B cell (primary cell): ENCODE measurements at regions of chr3 and their contacts with region 1.

Region 1: GRCh38 chr3:129439817-129440617 is at the starts of genes IFT122 and MBD4:
- DNase-seq: peak; percentile 99
- ATAC-seq: peak; percentile 84
- H3K4me3 ChIP-seq: peak within 1 kb of the TSS; percentile 81 to 100 (median 99)
- H3K4me3 Mint-ChIP-seq: peak within 1 kb of the TSS; percentile 93
- H3K27ac ChIP-seq: peak within 1 kb of the TSS; percentile 78 to 91
- H3K27ac Mint-ChIP-seq: peak within 1 kb of the TSS; percentile 95
- H3K4me1 ChIP-seq: peaks cover 45 to 46% of the 10 kb centered on the region in 2 donors
- H3K4me1 Mint-ChIP-seq: peaks cover 52% of the 10 kb centered on the region
- H3K27me3 ChIP-seq: no peaks in the 10 kb centered on the region
- H3K27me3 Mint-ChIP-seq: no peaks in the 10 kb centered on the region
- CTCF ChIP-seq: no peak
- total RNA-seq, gene IFT122: 28.7 and 34.3 TPM in 2 replicates
- total RNA-seq, gene MBD4: 140 and 144 TPM in 2 replicates

Region 2: DNA sequence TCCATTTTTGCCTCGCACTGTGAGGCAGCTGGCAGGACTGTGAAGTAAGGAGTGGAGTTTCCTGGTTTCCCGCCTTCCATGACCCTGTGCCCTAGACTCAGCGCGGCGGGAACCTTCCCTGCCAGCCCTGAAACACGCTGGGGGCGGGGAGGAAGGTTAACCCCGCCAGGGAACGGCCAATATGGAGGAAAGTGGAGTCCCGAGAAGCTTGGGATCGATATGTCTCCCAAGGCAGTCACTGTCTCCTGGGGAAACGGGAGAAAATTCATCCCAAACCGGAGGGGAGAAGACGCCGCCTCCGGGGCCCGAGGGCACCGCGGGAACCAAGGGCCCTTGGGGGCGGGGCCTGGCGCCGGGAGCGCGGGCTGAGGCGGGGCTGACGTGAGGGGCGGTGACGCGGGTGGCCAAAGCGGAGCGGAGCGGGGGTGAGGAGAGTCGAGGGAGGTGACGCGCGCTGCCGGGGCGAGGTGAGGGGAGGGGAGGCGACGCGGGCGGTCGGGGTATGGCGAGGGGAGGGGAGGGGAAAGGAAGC is 161.5 kb before region 1 on chr3 and contains the start of gene HMCES:
- CTCF ChIA-PET with region 1: no interaction called
- POLR2A ChIA-PET with region 1: no interaction called
- intact Hi-C with region 1: loop called (anchors 5 kb)
- DNase-seq: peak; percentile 94
- ATAC-seq: peak; percentile 72
- H3K4me3 ChIP-seq: peak within 1 kb of the TSS; percentile 79 to 92 (median 88)
- H3K4me3 Mint-ChIP-seq: peak within 1 kb of the TSS; percentile 95
- H3K27ac ChIP-seq: peak within 1 kb of the TSS; percentile 86
- H3K27ac Mint-ChIP-seq: peak within 1 kb of the TSS; percentile 91
- H3K4me1 ChIP-seq: peaks cover 67 to 73% of the 10 kb centered on the region in 2 donors
- H3K4me1 Mint-ChIP-seq: peaks cover 73% of the 10 kb centered on the region
- H3K27me3 ChIP-seq: peaks cover 0 to 4% (median 0%) of the 10 kb centered on the region in 4 experiments
- H3K27me3 Mint-ChIP-seq: peaks cover 5% of the 10 kb centered on the region
- CTCF ChIP-seq: no peak
- total RNA-seq, gene HMCES: 22.1 and 22.5 TPM in 2 replicates

Region 3: GRCh38 chr3:129399145-129399894 is 40.7 kb before region 1 on chr3:
- CTCF ChIA-PET with region 1: interaction called, 8 read pairs
- POLR2A ChIA-PET with region 1: interaction called, 12 read pairs
- intact Hi-C with region 1: loop called (anchors 1 kb)
- DNase-seq: peak; percentile 94
- ATAC-seq: peak; percentile 86
- H3K4me3 ChIP-seq: peak overlapping the region; percentile 76 to 99 (median 89)
- H3K4me3 Mint-ChIP-seq: peak overlapping the region; percentile 96
- H3K27ac ChIP-seq: peak overlapping the region; percentile 88 to 95
- H3K27ac Mint-ChIP-seq: peak overlapping the region; percentile 94
- H3K4me1 ChIP-seq: peaks cover 20 to 22% of the 10 kb centered on the region in 2 donors
- H3K4me1 Mint-ChIP-seq: peaks cover 35% of the 10 kb centered on the region
- H3K27me3 ChIP-seq: no peaks in the 10 kb centered on the region
- H3K27me3 Mint-ChIP-seq: no peaks in the 10 kb centered on the region
- CTCF ChIP-seq: peak; percentile 90

Region 4: GRCh38 chr3:129576514-129577352 is 136.7 kb after region 1 on chr3:
- CTCF ChIA-PET with region 1: no interaction called
- POLR2A ChIA-PET with region 1: interaction called, 3 read pairs
- intact Hi-C with region 1: loop called (anchors 5 kb)
- DNase-seq: peak; percentile 85
- ATAC-seq: peak; percentile 71
- H3K4me3 ChIP-seq: peak overlapping the region in 1 of 5 experiments; percentile 40
- H3K4me3 Mint-ChIP-seq: peak overlapping the region; percentile 83
- H3K27ac ChIP-seq: peak overlapping the region; percentile 69 to 83
- H3K27ac Mint-ChIP-seq: peak overlapping the region; percentile 98
- H3K4me1 ChIP-seq: peaks cover 50 to 59% of the 10 kb centered on the region in 2 donors
- H3K4me1 Mint-ChIP-seq: peaks cover 70% of the 10 kb centered on the region
- H3K27me3 ChIP-seq: no peaks in the 10 kb centered on the region
- H3K27me3 Mint-ChIP-seq: no peaks in the 10 kb centered on the region
- CTCF ChIP-seq: no peak

Region 5: DNA sequence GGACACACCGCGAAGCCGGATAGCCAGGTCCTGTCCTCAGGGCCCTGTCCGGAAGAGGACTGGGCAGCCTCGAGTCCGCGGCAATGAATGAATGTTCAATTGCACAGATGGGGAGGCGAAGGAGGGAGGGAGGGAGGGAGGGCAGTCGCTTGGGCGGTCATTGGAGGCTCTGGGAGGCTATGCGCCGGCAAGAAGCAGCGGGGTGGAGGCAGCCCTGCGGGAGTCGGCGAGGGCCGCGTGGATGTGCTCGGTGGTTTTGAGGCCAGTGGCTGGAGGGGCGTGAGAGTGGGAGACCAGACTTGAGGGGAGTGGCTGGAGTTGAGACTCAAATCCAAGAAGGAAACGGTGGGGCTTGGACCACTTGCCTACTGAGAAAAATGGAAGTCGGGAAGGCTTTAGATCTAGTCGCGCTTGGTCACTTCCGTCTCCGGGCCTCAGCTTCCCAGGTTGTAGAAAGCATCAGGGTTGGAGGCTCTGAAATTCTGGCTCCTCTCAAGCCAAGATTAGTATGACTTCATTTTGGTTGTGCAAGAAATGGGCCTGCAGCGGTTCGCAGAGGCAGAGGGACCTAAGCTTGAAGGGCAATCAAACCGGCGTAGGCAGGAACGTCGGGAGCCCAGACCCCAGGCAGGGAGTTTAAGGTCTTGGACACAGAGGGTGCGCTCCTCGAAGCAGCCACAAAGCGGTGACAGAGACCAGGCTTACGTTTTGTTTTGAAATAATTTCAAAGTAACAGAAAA is 187.6 kb after region 1 on chr3:
- CTCF ChIA-PET with region 1: no interaction called
- POLR2A ChIA-PET with region 1: no interaction called
- intact Hi-C with region 1: loop called (anchors 5 kb)
- DNase-seq: peak; percentile 78
- ATAC-seq: peak; percentile 52
- H3K4me3 ChIP-seq: peak overlapping the region; percentile 49 to 86 (median 72)
- H3K4me3 Mint-ChIP-seq: peak overlapping the region; percentile 98
- H3K27ac ChIP-seq: peak overlapping the region in 1 of 2 donors; percentile 37
- H3K27ac Mint-ChIP-seq: peak overlapping the region; percentile 88
- H3K4me1 ChIP-seq: peaks cover 5 to 18% of the 10 kb centered on the region in 2 donors
- H3K4me1 Mint-ChIP-seq: peaks cover 17% of the 10 kb centered on the region
- H3K27me3 ChIP-seq: no peaks in the 10 kb centered on the region
- H3K27me3 Mint-ChIP-seq: no peaks in the 10 kb centered on the region
- CTCF ChIP-seq: peak; percentile 77

Region 6: GRCh38 chr3:129893581-129894070 is 453.6 kb after region 1 on chr3 and contains the start of gene TMCC1:
- CTCF ChIA-PET with region 1: no interaction called
- POLR2A ChIA-PET with region 1: no interaction called
- intact Hi-C with region 1: loop called (anchors 1 kb)
- DNase-seq: peak; percentile 94
- ATAC-seq: peak; percentile 87
- H3K4me3 ChIP-seq: peak within 1 kb of the TSS; percentile 79 to 97 (median 89)
- H3K4me3 Mint-ChIP-seq: peak within 1 kb of the TSS; percentile 93
- H3K27ac ChIP-seq: peak within 1 kb of the TSS; percentile 87 to 93
- H3K27ac Mint-ChIP-seq: peak within 1 kb of the TSS; percentile 90
- H3K4me1 ChIP-seq: peaks cover 30 to 34% of the 10 kb centered on the region in 2 donors
- H3K4me1 Mint-ChIP-seq: peaks cover 39% of the 10 kb centered on the region
- H3K27me3 ChIP-seq: no peaks in the 10 kb centered on the region
- H3K27me3 Mint-ChIP-seq: no peaks in the 10 kb centered on the region
- CTCF ChIP-seq: no peak
- total RNA-seq, gene TMCC1: 32.2 and 37.8 TPM in 2 replicates